ENCODE measurements at regions of chr3 and their contacts with region 1.

Region 1: GRCh38 chr3:56702490-56703315 is 19.6 kb upstream of the TASOR start:
- DNase-seq: peak; percentile 52
- H3K4me3 ChIP-seq: no peak overlapping the region
- H3K27ac ChIP-seq: no peak overlapping the region
- H3K4me1 ChIP-seq: peaks cover 9% of the 10 kb centered on the region
- H3K27me3 ChIP-seq: no peaks in the 10 kb centered on the region
- CTCF ChIP-seq: peak; percentile 80 to 83

Region 2: DNA sequence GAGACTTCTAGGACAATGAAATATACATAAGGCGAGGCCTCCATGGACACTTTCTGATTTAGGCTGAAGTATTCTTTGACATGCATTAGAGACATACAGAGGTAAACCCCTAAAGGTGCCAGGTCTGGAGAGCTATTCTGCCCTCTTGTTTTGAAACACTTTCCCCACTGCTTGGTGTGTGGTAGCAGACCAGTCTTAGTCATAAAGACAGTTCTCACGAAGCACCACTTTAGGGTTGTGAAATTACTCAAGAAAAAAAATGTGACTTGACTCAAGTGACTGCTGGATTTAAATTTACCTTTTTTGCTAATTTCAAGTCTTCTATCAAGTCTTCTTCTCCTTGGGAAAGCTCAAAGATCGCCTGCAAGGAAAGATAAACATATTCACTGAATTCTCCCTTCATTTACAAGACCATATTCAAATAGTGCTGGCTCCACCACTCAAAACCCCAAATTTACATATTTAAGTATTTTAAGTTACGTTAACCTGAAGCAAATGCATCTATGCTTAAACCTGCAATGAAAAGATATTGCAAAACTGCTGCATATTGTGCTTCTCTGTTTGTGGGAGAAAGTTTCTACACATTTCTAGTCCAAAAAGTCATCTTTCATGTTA is 50.6 kb after region 1 on chr3:
- CTCF ChIA-PET with region 1: no interaction called
- dilution Hi-C with region 1: no loop called
- in situ Hi-C with region 1: no loop called
- intact Hi-C with region 1: loop called (anchors 5 kb)
- DNase-seq: peak; percentile 40
- H3K4me3 ChIP-seq: no peak overlapping the region
- H3K27ac ChIP-seq: no peak overlapping the region
- H3K4me1 ChIP-seq: peaks cover 8% of the 10 kb centered on the region
- H3K27me3 ChIP-seq: no peaks in the 10 kb centered on the region
- CTCF ChIP-seq: no peak

Region 3: DNA sequence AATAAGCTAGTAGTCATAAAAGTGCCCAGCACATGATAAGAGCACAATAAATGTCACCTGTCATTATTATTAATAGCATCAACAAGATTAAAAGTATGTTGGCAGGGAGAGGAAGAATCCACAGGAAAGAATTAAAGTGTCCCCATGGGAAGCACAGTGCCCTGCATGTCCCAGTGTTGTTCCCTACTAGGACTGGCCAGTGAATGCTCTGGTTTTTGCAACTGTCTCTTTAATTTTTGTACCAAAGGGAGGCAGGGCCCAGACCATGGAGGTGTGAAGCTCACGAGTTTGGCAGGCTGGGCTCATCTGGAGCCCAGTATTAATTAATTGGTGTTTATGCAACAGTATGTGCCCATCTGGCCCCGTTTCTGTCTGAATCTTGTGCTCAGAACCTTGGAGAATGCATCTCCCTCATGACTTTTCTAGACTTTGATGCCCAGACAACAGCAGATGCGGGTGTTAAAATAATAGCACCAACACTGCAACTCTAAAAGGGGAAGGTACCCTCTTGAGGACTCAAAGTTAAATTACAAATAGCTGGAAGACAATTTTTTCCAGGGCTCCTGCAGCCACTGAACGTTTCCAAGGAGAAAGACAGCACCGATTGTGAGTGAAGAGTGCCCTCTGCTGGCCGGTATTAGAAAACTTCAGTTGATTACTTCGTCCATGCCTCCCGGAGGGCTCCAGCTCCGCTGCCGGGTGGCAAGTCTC is 285.9 kb after region 1 on chr3:
- CTCF ChIA-PET with region 1: interaction called, 8 read pairs
- dilution Hi-C with region 1: loop called (anchors 10 kb)
- in situ Hi-C with region 1: loop called (anchors 5 kb)
- intact Hi-C with region 1: loop called (anchors 1 kb)
- DNase-seq: peak; percentile 59
- H3K4me3 ChIP-seq: no peak overlapping the region
- H3K27ac ChIP-seq: no peak overlapping the region
- H3K4me1 ChIP-seq: no peaks in the 10 kb centered on the region
- H3K27me3 ChIP-seq: no peaks in the 10 kb centered on the region
- CTCF ChIP-seq: peak; percentile 46 to 70

Region 4: DNA sequence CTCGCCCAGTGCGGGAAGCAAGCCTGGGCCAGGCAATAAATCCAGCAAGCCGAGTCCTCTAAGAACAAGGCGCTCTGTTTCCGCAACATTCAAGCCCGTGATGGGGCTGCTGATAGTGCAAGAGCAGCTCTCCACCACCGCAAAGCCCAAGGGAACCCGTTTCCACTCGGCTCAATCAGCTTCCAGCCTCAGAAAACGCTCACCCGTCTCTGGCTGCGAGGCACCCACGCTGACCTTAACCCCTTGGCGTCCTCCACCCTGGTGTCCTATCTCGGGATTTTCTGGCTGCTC is 375.6 kb after region 1 on chr3:
- CTCF ChIA-PET with region 1: no interaction called
- dilution Hi-C with region 1: loop called (anchors 25 kb)
- in situ Hi-C with region 1: no loop called
- intact Hi-C with region 1: loop called (anchors 5 kb)
- DNase-seq: peak; percentile 28
- H3K4me3 ChIP-seq: peak overlapping the region; percentile 80 to 92 (median 87)
- H3K27ac ChIP-seq: no peak overlapping the region
- H3K4me1 ChIP-seq: peaks cover 6% of the 10 kb centered on the region
- H3K27me3 ChIP-seq: no peaks in the 10 kb centered on the region
- CTCF ChIP-seq: no peak

Region 5: GRCh38 chr3:57094575-57094974 is 391.9 kb after region 1 on chr3:
- CTCF ChIA-PET with region 1: no interaction called
- dilution Hi-C with region 1: loop called (anchors 25 kb)
- in situ Hi-C with region 1: no loop called
- intact Hi-C with region 1: loop called (anchors 5 kb)
- DNase-seq: no peak
- H3K4me3 ChIP-seq: no peak overlapping the region
- H3K27ac ChIP-seq: no peak overlapping the region
- H3K4me1 ChIP-seq: peaks cover 15% of the 10 kb centered on the region
- H3K27me3 ChIP-seq: no peaks in the 10 kb centered on the region
- CTCF ChIP-seq: no peak

Region 6: DNA sequence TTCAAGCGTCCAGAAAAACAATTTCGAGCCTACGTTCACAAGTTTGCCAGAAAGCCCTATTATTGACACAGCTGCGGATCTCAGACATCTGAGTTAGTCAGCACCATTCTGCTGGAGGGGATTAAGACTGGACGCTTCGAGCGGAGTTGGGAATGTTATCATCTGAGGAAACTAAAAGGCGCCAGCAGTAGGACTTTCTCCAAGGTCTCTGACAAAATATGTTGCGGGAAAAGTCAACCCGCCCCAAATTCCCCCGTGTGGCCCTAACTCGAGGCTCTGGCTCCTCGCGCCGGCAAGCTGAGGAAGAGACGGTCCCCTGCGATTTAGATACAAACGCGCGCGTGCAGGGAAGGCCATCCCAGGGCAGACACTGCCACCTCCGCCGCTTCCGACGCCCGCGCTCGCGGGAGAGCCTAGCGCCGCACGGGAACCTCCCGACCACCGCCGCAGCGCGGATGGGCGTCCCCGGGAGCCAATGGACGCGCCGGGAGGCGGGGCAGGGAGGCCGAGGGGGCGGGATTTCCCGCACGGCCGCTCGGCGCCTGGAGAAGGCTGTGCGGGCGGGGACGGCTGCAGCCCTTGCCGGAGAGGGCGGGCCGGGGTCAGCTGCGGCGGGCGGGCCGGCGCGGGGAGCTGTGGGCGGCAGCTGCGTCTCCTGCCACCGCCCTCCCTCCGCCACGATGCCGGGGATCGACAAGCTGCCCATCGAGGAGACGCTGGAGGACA is 524.7 kb after region 1 on chr3 and contains the start of gene APPL1:
- CTCF ChIA-PET with region 1: no interaction called
- dilution Hi-C with region 1: no loop called
- in situ Hi-C with region 1: no loop called
- intact Hi-C with region 1: loop called (anchors 5 kb)
- DNase-seq: peak; percentile 87
- H3K4me3 ChIP-seq: peak within 1 kb of the TSS; percentile 67 to 86 (median 85)
- H3K27ac ChIP-seq: peak within 1 kb of the TSS; percentile 61
- H3K4me1 ChIP-seq: peaks cover 29% of the 10 kb centered on the region
- H3K27me3 ChIP-seq: no peaks in the 10 kb centered on the region
- CTCF ChIP-seq: peak in 1 of 2 donors; percentile 10
- total RNA-seq, gene APPL1: 34.7 to 60.7 TPM

Measured in mammary epithelial cell (primary cell).